Activated naive CD4-positive, alpha-beta T cell treated with anti-CD3 and anti-CD28 coated beads, Interleukin-2, amount 10 ng/mL, durations not matched to agents 7 days and 5 days (primary cell): ENCODE measurements at regions of chr3 and their contacts with region 1.

Region 1: GRCh38 chr3:8223766-8224165 is 277.9 kb upstream of the LMCD1 start:
- DNase-seq: no peak
- H3K4me3 Mint-ChIP-seq: no peak overlapping the region
- H3K27ac Mint-ChIP-seq: no peak overlapping the region
- H3K4me1 Mint-ChIP-seq: no peaks in the 10 kb centered on the region
- H3K27me3 Mint-ChIP-seq: no peaks in the 10 kb centered on the region

Region 2: GRCh38 chr3:8239718-8240695 is 16.2 kb after region 1 on chr3:
- CTCF ChIA-PET with region 1: interaction called, 10 read pairs
- DNase-seq: peak; percentile 44
- H3K4me3 Mint-ChIP-seq: no peak overlapping the region
- H3K27ac Mint-ChIP-seq: no peak overlapping the region
- H3K4me1 Mint-ChIP-seq: no peaks in the 10 kb centered on the region
- H3K27me3 Mint-ChIP-seq: no peaks in the 10 kb centered on the region

Region 3: DNA sequence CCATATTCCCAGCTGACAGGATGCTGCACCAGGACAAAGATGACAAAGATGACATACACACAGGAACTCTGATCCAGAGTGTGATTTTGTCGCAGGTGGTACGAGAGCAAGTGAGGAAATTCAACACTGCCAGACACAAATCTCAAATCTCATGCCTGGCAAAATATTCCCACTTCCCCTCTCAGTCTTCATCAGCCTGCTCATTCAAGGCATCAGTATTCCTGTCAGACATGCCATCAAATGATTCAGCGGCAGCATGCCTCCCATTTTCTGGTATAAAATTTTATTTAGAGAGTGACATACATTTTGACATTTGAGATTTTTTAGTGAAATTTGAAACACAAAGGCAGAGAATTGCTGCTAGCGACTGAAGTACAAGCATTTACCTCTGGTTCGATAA is 49.7 kb after region 1 on chr3:
- CTCF ChIA-PET with region 1: no interaction called
- DNase-seq: no peak
- H3K4me3 Mint-ChIP-seq: no peak overlapping the region
- H3K27ac Mint-ChIP-seq: no peak overlapping the region
- H3K4me1 Mint-ChIP-seq: no peaks in the 10 kb centered on the region
- H3K27me3 Mint-ChIP-seq: no peaks in the 10 kb centered on the region